ENCODE measurements at regions of chr3 and their contacts with region 1.

Region 1: DNA sequence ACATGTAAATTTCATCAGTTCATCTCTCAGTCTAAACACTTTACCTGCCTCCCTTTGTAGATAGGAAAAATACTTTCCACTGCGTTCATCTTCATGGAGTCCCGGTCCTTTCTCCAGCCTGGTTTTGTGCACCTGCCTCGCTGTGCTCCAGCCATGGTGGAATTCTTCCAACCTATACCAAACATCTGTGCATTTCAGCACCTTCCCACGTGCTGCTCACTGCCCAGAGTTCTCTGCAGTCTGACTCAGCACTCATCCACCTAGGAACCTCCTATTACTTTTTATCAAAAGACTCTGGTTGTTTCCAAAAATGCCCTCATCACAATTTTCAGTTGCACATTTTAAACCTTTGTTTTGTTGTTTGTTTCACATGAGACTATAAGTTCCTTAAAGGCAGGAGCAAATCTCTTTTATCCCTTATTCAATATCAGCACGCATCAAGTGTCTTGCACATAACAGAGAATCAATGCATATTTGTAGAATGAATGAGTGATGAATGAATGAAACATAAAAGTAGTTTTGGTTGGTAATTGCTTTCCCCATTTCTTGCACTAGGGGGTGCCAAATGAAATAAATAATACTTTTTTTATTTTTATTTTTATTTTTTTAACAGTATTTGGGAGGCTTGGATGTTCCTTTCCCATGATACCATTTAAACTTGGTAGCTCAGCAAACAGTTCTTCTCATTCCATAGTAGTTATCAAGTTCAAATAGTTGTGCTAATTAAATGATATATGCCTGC is 30.2 kb upstream of the ADAMTS9 start:
- DNase-seq: no peak
- ATAC-seq: no peak

Region 2: GRCh38 chr3:64666171-64666588 is 51.9 kb before region 1 on chr3:
- intact Hi-C with region 1: no loop called
- DNase-seq: no peak
- ATAC-seq: no peak

Region 3: DNA sequence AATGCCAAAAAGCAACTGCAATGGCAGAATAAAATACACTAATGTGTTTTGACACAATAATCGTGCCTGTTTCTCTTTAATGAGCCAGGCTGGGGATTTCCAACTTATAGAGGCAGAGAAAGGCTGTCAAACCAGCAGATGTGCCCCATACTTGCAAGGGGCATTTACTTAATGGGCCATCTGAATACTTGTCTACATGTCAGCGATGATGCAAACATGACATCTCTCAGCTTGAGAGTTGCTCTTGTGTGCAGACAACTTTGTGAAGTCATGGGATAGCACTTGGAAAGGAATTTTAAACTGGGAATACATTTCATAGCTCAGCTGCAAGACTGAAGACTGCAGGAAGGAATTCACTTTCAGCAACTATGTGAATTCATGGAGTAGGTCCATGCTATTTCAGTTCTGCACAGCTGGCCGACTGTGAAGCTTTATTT is 97.2 kb after region 1 on chr3:
- intact Hi-C with region 1: loop called (anchors 10 kb)
- DNase-seq: no peak
- ATAC-seq: peak; percentile 85

Region 4: DNA sequence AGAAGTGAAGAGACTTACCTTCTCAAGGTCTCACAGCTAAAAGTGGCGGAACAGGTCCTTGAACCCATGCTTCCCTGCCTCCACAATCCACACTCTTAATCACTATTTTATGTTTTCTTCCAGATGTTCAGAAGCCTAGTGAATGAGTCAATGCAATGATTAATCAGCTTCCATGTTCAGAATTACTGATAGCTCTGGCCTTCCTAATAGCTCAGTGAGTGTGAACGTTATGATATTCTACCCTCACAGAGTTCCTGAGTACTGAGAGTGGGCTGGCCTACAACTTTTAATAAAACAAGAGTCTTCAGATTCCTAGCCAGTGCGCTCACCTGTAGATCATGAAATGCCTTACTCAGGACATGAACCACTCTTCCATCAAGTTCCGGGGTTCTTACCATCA is 412.7 kb after region 1 on chr3:
- intact Hi-C with region 1: no loop called
- DNase-seq: no peak
- ATAC-seq: no peak